GM12878 (cell line): ENCODE measurements at regions of chr15 and their contacts with region 1.

Region 1: DNA sequence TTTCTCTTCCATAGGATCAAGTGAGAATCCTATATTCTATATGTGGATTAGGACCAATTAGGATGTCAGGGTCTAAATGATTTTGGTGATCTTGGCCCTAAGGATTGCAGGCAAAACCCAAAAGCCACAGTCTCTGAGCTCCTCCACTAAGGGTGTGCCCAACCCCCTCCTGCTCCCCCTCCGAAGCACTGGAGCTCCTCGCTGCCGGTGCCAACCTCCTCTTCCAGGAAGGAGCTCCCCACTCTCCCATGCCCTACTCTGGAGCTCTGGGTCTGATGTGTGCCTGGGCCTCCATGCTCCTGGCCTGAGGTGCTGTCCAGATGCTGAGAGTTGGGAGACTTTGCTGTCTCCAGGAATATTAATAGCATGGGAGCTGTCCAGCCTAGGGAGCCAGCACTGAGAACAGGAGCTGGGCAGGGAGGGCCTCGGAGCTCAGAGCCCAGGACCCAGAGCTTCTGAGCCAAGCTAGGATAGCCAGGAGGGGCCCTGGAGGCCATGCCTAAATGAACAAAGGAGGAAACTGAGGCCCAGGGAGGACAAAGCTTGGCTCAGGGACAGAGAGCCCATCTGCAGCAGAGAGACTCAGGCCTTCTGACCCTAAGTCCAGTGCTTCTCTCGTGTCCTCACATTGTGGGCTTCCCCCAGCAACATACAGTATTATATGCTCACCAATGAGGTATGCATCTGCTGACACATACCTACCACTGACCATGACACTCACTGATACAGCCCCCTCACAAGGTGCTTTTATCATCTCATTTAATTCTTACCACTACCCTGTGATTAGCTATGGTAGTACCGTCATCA is 36.9 kb upstream of the HERC1 start:
- DNase-seq: no peak
- ATAC-seq: peak; percentile 71
- H3K4me3 ChIP-seq: no peak overlapping the region
- H3K27ac ChIP-seq: peak overlapping the region; percentile 8; the same call in 1 of the 2 replicates
- H3K4me1 ChIP-seq: peaks cover 20% of the 10 kb centered on the region
- H3K27me3 ChIP-seq: no peaks in the 10 kb centered on the region
- CTCF ChIP-seq: no peak
- EP300 ChIP-seq: no peak
- POLR2A ChIP-seq: no peak
- RAD21 ChIP-seq: no peak

Region 2: GRCh38 chr15:63833021-63833696 is 37.4 kb before region 1 on chr15:
- CTCF ChIA-PET with region 1: interaction called, 3 read pairs
- POLR2A ChIA-PET with region 1: interaction called, 13 read pairs
- RAD21 ChIA-PET with region 1: interaction called, 5 read pairs
- SMC1A ChIA-PET with region 1: interaction called, 4 read pairs
- in situ Hi-C with region 1: no loop called
- intact Hi-C with region 1: no loop called
- DNase-seq: no peak
- ATAC-seq: peak; percentile 68
- H3K4me3 ChIP-seq: peak overlapping the region; percentile 99
- H3K27ac ChIP-seq: peak overlapping the region; percentile 99
- H3K4me1 ChIP-seq: peaks cover 10% of the 10 kb centered on the region
- H3K27me3 ChIP-seq: no peaks in the 10 kb centered on the region
- CTCF ChIP-seq: no peak
- EP300 ChIP-seq: no peak
- POLR2A ChIP-seq: no peak
- RAD21 ChIP-seq: no peak

Region 3: GRCh38 chr15:63848499-63849214 is 21.9 kb before region 1 on chr15:
- CTCF ChIA-PET with region 1: interaction called, 4 read pairs
- POLR2A ChIA-PET with region 1: interaction called, 8 read pairs
- RAD21 ChIA-PET with region 1: interaction called, 22 read pairs
- SMC1A ChIA-PET with region 1: interaction called, 28 read pairs
- in situ Hi-C with region 1: no loop called
- intact Hi-C with region 1: no loop called
- DNase-seq: no peak
- ATAC-seq: peak; percentile 41; the same call in 2 of the 3 replicates
- H3K4me3 ChIP-seq: no peak overlapping the region
- H3K27ac ChIP-seq: no peak overlapping the region
- H3K4me1 ChIP-seq: peaks cover 12% of the 10 kb centered on the region
- H3K27me3 ChIP-seq: no peaks in the 10 kb centered on the region
- CTCF ChIP-seq: no peak
- EP300 ChIP-seq: no peak
- POLR2A ChIP-seq: no peak
- RAD21 ChIP-seq: no peak

Region 4: GRCh38 chr15:63881431-63881830 is 10.8 kb after region 1 on chr15:
- CTCF ChIA-PET with region 1: interaction called, 17 read pairs
- POLR2A ChIA-PET with region 1: interaction called, 53 read pairs
- RAD21 ChIA-PET with region 1: interaction called, 70 read pairs
- SMC1A ChIA-PET with region 1: interaction called, 84 read pairs
- in situ Hi-C with region 1: no loop called
- intact Hi-C with region 1: no loop called
- DNase-seq: peak; percentile 81
- ATAC-seq: peak; percentile 69
- H3K4me3 ChIP-seq: no peak overlapping the region
- H3K27ac ChIP-seq: peak overlapping the region; percentile 66
- H3K4me1 ChIP-seq: peaks cover 53% of the 10 kb centered on the region
- H3K27me3 ChIP-seq: no peaks in the 10 kb centered on the region
- CTCF ChIP-seq: 0 out of 6 replicates have a peak, but pooled peaks of 1 of the 3 experiments have one; percentile 7
- EP300 ChIP-seq: peak; percentile 16 to 51; a peak in 1 of 4 replicates
- POLR2A ChIP-seq: no peak
- RAD21 ChIP-seq: no peak

Region 5: GRCh38 chr15:63896336-63897115 is 25.9 kb after region 1 on chr15:
- CTCF ChIA-PET with region 1: interaction called, 22 read pairs
- POLR2A ChIA-PET with region 1: interaction called, 6 read pairs
- RAD21 ChIA-PET with region 1: interaction called, 13 read pairs
- SMC1A ChIA-PET with region 1: interaction called, 18 read pairs
- in situ Hi-C with region 1: no loop called
- intact Hi-C with region 1: no loop called
- DNase-seq: peak; percentile 90
- ATAC-seq: peak; percentile 84
- H3K4me3 ChIP-seq: no peak overlapping the region
- H3K27ac ChIP-seq: peak overlapping the region; percentile 84
- H3K4me1 ChIP-seq: peaks cover 59% of the 10 kb centered on the region
- H3K27me3 ChIP-seq: no peaks in the 10 kb centered on the region
- CTCF ChIP-seq: no peak
- EP300 ChIP-seq: peak; percentile 93 to 95
- POLR2A ChIP-seq: no peak
- RAD21 ChIP-seq: no peak